ENCODE measurements at regions of chrX and their contacts with region 1.

Region 1: DNA sequence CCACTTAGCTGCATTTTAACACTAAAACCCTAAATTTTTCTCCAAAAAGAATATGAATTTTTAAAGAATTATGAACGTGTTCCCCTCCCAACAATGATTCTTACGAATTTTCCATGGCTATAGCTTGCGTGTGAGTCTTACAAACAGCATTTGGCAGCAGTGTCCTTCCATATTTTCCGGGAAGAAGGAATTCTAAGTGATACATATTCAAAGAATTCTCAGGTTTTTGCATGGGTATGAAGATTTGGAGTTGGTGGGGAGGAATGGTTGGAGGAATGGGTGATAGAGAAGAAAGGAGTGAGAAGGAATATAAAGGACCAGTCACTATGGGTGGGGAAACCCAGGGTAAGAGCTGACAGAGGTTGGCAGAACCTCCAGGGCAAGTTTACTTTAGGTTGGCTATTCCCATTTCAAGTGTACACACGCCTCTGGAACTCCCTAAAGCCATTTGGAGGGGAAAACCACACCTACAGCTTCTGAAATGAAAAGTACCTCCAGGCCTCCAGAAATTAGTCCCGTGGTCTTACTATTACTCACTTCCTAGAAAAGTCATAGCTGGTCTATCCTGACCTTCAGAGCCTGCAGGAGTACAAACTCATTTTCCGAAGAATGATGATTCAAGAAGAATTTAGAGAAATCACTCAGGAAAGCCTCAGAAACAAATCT is 420.8 kb upstream of the DIPK2B start:
- DNase-seq: peak; percentile 24
- H3K4me3 ChIP-seq: no peak overlapping the region
- CTCF ChIP-seq: no peak

Region 2: GRCh38 chrX:45668686-45669443 is 47.4 kb after region 1 on chrX:
- CTCF ChIA-PET with region 1: no interaction called
- POLR2A ChIA-PET with region 1: interaction called, 20 read pairs
- DNase-seq: peak; percentile 79
- H3K4me3 ChIP-seq: no peak overlapping the region
- CTCF ChIP-seq: no peak

Measured in AG04449 (cell line).